Vagina (tissue), 2 donors: ENCODE measurements at regions of chr16 and their contacts with region 1.

Region 1: GRCh38 chr16:51129105-51129504 is 22.0 kb downstream of the SALL1 start:
- DNase-seq: no peak
- H3K4me3 ChIP-seq: no peak overlapping the region
- H3K27ac ChIP-seq: no peak overlapping the region
- H3K4me1 ChIP-seq: peaks cover 5% of the 10 kb centered on the region
- H3K27me3 ChIP-seq: no peaks in the 10 kb centered on the region
- CTCF ChIP-seq: no peak
- POLR2A ChIP-seq: no peak

Region 2: GRCh38 chr16:51062039-51062438 is 67.1 kb before region 1 on chr16:
- intact Hi-C with region 1: no loop called
- DNase-seq: no peak
- H3K4me3 ChIP-seq: no peak overlapping the region
- H3K27ac ChIP-seq: no peak overlapping the region
- H3K4me1 ChIP-seq: no peaks in the 10 kb centered on the region
- H3K27me3 ChIP-seq: no peaks in the 10 kb centered on the region
- CTCF ChIP-seq: no peak
- POLR2A ChIP-seq: no peak

Region 3: GRCh38 chr16:51326131-51326856 is 197.2 kb after region 1 on chr16:
- intact Hi-C with region 1: no loop called
- DNase-seq: no peak
- H3K4me3 ChIP-seq: no peak overlapping the region
- H3K27ac ChIP-seq: peak overlapping the region; percentile 63
- H3K4me1 ChIP-seq: peaks cover 10% of the 10 kb centered on the region
- H3K27me3 ChIP-seq: no peaks in the 10 kb centered on the region
- CTCF ChIP-seq: no peak
- POLR2A ChIP-seq: no peak

Region 4: DNA sequence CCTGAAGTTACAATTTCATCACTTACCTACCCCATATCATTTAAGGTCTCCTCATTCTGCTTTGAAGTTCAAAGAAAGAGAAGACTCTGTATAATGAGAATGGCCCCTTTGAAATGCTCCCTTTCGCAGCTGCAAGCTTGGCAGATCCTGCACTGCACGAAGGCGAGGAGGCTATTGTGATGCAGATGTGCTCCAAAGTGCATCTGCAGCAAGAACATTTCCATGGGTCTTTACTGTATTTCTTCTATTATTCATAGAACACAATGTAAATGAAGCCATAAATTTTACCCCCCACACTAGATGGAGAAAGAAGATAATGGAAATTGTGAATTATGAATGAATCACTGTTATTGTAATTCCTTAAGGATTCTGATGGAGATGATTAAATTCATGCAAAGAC is 1744.9 kb after region 1 on chr16:
- intact Hi-C with region 1: loop called (anchors 5 kb)
- DNase-seq: no peak
- H3K4me3 ChIP-seq: no peak overlapping the region
- H3K27ac ChIP-seq: no peak overlapping the region
- H3K4me1 ChIP-seq: no peaks in the 10 kb centered on the region
- H3K27me3 ChIP-seq: no peaks in the 10 kb centered on the region
- CTCF ChIP-seq: no peak
- POLR2A ChIP-seq: no peak